MCF 10A (cell line): ENCODE measurements at regions of chr6 and their contacts with region 1.

Region 1: GRCh38 chr6:109461733-109462526 is 6.4 kb upstream of the MICAL1 start:
- DNase-seq: no peak
- H3K4me3 Mint-ChIP-seq: no peak overlapping the region
- H3K27ac Mint-ChIP-seq: peak overlapping the region; percentile 43
- H3K4me1 Mint-ChIP-seq: peaks cover 13% of the 10 kb centered on the region
- H3K27me3 Mint-ChIP-seq: no peaks in the 10 kb centered on the region
- CTCF ChIP-seq: no peak

Region 2: DNA sequence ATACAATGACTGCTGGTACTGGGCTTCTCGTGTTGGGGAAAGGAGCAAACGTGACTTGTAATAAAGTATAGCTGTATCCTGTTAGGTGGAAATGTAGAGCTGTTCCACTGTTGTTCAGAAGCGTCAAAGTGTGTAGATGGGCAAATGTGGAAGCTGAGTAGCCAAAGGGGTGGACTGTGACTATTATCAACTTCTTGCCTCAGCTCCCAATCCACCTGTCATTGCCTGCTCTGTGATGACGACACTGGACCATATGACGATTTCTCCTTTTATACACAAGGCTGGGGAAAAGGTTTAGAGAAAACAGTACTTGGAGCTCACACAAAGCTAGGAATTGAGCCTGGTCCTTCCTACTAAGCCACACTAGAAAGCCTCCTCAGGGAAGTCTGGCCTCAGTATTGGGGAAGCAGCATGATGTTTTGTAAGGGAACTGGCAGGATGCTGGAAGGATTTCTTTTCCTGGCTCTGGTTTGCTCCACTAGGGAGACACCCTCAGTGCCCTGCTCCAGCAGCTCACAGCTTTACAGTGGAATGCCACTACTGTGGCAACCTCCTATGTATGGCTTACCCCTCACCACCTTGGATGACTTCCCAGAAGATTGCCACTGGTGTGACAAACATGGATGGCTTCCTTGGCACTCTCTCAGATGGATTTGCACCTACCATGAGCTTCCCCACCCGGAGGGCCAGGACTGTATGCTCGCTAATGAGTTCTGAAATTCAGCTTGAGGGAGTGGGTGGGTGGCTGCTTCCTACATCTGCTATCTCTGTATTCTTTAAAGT is 99.6 kb before region 1 on chr6:
- CTCF ChIA-PET with region 1: no interaction called
- POLR2A ChIA-PET with region 1: no interaction called
- intact Hi-C with region 1: no loop called
- DNase-seq: no peak
- H3K4me3 Mint-ChIP-seq: no peak overlapping the region
- H3K27ac Mint-ChIP-seq: no peak overlapping the region
- H3K4me1 Mint-ChIP-seq: no peaks in the 10 kb centered on the region
- H3K27me3 Mint-ChIP-seq: no peaks in the 10 kb centered on the region
- CTCF ChIP-seq: no peak

Region 3: DNA sequence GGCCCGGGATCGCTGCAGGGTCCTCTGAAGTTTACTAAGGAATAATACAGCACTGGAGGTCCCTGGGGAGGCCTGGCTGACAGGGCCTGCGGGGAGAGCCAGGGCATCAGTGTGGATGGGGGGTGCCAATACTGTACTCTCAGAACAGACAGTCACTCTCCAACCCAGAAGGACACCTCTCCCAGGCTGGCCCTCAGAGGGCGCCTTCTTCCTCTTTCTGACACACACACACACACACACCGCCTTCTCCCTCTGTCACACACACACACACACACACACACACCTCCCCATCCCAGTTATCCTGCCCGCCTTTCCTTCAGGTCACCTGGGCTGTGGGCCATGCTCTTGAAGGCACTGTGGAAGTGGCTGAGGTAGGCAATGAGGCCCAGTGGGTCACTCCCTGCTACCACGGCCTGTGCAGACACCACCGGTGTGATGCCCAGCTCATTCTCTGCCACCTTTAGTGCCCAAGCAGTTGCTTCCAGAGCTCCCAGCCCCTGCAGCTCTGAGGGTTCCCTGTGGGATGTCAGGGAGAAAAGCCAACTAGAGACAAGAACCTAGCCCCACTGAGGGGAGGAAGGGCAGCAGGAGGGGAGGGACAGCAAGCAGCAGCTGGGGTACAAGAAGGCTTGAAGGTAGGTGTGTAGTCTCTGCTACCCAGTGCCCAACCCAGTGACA is 13.9 kb before region 1 on chr6:
- CTCF ChIA-PET with region 1: interaction called, 4 read pairs
- POLR2A ChIA-PET with region 1: interaction called, 20 read pairs
- intact Hi-C with region 1: no loop called
- DNase-seq: no peak
- H3K4me3 Mint-ChIP-seq: no peak overlapping the region
- H3K27ac Mint-ChIP-seq: no peak overlapping the region
- H3K4me1 Mint-ChIP-seq: no peaks in the 10 kb centered on the region
- H3K27me3 Mint-ChIP-seq: no peaks in the 10 kb centered on the region
- CTCF ChIP-seq: no peak